ENCODE measurements at regions of chr21 and their contacts with region 1.

Region 1: GRCh38 chr21:35204850-35205541 is 155.9 kb upstream of the RUNX1 start:
- DNase-seq: peak; percentile 88 to 91
- ATAC-seq: peak; percentile 72
- H3K4me3 ChIP-seq: peak overlapping the region in 1 of 2 donors; percentile 23
- H3K27ac ChIP-seq: peak overlapping the region in 1 of 2 donors; percentile 25
- H3K4me1 ChIP-seq: peaks cover 0 to 6% of the 10 kb centered on the region in 2 donors
- H3K27me3 ChIP-seq: no peaks in the 10 kb centered on the region

Region 2: DNA sequence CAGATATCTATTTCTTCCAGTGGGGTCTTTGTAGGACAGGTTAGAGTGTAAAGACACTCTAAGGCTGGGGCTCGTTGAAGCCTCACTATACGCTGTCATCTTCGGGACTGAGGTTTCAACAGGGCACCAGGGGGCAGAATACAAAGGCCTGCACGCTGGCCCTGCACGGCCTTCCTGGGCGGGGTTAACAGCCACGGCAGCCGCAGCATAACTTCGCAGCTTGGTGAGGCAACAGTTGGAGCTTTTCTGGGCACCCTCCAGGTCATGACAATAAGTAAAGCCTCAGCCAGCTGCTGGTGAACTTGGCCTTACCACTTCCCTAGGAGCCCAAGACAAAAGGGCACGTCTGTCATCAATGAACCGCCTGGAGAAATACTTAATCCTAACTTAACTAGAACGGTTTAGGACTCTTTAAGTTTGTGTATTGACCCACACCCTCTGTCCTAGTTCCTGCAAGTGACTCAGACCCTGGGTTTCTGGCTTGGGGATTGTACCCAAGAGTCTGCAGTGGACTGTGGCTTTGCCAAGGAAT is 153.6 kb before region 1 on chr21:
- intact Hi-C with region 1: loop called in 1 of 2 experiments (anchors 5 kb)
- DNase-seq: peak; percentile 88 to 93
- ATAC-seq: peak; percentile 71
- H3K4me3 ChIP-seq: no peak overlapping the region
- H3K27ac ChIP-seq: peak overlapping the region in 1 of 2 donors; percentile 93
- H3K4me1 ChIP-seq: peaks cover 0 to 7% of the 10 kb centered on the region in 2 donors
- H3K27me3 ChIP-seq: no peaks in the 10 kb centered on the region

Region 3: DNA sequence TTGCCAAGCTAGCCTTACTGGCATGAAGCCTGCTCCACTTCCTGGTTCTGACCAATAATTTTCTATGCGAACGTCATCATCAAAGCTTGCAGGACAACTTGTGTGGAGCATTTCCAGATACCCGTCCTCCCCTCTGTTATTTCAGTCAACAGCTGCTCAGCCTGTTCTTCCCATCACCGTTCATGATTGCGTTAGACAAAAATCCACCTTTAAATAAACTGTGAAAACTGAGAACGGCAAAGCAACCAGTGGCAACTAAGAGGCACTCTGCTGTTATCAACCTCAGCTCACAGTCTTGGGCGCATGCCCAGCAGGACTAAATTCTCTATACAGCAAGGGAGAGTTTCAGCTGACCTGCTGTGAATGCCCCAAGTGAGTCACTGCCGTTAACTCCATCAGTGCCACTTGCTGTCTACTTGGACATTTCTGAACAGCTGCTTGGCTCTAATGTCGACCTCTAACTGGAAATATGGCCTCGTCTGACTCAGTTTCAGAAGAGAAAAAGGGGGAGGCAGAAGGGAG is 51.5 kb after region 1 on chr21:
- intact Hi-C with region 1: loop called in 1 of 2 experiments (anchors 2 kb)
- DNase-seq: peak; percentile 91 to 92
- ATAC-seq: peak; percentile 82
- H3K4me3 ChIP-seq: no peak overlapping the region
- H3K27ac ChIP-seq: peak overlapping the region in 1 of 2 donors; percentile 17
- H3K4me1 ChIP-seq: no peaks in the 10 kb centered on the region
- H3K27me3 ChIP-seq: no peaks in the 10 kb centered on the region

Region 4: DNA sequence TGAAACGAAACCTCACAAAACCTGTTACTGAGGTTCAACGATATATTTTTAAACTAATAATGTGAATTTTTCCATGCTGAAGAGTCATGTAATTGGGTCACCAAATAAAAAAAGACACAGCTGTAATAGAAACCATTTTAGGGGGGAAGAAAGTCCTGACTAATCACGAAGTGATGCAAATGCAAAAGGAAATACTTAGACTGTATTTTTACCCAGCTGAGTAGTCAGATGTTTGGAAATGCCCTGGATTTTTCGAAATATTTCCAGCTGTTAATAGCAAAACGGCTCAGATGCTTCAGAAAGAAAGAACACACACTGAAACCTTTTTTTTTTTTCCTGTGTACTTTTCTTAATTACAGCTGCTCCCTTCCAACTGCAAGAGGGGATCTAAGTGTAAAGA is 645.0 kb after region 1 on chr21:
- intact Hi-C with region 1: loop called in 1 of 2 experiments (anchors 10 kb)
- DNase-seq: no peak
- ATAC-seq: peak; percentile 82
- H3K4me3 ChIP-seq: no peak overlapping the region
- H3K27ac ChIP-seq: peak overlapping the region in 1 of 2 donors; percentile 77
- H3K4me1 ChIP-seq: no peaks in the 10 kb centered on the region
- H3K27me3 ChIP-seq: no peaks in the 10 kb centered on the region